ENCODE measurements at regions of chrX and their contacts with region 1.

Region 1: DNA sequence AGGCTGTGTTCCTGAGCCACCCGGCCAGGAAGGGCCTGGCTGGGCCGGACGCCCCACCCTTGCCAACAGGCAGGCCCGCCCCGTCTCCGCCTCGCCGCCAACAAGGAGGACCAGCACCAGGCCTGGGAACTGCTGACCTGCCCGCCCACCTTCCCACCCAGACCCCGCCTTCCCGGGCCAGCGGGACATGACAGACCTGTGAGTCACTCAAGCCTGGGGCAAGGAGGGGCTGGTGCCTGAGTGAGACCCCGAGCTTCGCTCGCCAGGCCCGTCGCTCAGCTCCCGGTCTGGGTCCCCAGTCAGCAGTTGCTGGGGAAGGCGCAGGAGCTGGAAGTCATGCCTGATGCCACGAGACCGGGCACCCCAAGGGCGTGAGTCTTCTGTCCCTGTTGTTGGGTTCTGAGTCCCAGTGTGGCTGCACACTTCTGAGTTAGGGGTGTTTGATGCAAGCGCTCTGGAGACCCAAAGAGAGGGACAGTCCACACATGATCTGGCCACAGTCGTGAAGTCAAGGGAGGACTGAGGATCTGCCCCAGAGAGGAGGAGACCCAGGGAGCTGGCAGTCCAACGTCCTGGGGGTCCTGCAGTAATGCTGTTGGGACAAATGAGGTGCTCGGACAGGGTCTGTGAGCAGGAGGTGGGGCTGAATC is at the start of gene DNASE1L1:
- DNase-seq: peak; percentile 88
- ATAC-seq: peak; percentile 54
- total RNA-seq, gene DNASE1L1: 57.7 TPM

Region 2: DNA sequence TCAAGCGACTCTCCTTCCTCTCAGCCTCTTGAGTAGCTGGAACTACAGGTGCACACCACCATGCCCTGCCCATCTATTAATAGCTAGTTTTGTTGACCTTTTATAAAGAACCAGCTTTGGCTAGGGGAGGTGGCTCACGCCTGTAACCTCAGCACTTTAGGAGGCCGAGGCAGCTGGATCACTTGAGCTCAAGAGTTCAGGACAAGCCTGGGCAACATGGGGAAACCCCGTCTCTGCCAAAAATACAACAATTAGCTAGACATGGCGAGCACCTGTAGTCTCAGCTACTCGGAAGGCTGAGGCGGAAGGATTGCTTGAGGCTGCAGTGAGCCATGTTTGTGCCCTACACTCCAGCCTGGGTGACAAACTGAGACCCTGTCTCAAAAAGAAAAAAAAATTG is 111.0 kb before region 1 on chrX:
- intact Hi-C with region 1: no loop called
- DNase-seq: no peak
- ATAC-seq: no peak

Region 3: DNA sequence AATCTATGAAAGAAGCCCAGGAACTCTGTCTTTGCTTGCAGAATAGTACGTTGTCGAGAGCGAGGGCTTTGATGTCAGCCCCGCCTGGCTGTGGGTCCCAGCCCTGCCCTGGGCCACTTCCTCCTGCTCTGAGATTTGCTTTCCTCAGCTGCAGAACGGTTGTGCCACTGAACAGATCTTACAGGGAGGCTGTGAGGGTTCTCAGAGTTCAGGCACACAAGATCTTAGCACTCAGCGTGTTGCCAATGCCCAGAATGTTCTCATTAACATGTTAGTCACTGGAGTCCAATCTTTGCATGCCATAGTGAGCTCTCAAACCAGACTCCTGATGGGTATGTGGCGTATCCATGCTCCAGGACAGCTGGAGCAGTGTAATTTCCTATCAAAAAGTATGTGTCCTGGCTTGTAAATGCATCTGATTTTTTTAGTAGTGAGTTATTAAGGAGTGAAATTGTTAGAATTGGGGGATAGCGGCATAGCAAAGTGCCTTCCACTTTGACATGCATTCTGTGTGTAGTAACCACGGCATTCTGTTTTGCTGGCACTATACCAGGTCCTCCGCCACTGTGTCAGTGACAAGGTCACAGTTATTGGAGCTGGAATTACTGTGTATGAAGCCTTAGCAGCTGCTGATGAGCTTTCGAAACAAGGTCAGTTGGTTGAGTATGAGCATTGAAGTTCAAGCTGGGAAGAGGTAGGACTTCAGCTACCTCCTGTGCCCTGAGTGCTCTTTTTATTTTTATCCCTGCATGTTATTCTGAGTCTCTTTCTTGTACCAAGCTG is 82.1 kb before region 1 on chrX:
- intact Hi-C with region 1: no loop called
- DNase-seq: no peak
- ATAC-seq: peak; percentile 73

Region 4: DNA sequence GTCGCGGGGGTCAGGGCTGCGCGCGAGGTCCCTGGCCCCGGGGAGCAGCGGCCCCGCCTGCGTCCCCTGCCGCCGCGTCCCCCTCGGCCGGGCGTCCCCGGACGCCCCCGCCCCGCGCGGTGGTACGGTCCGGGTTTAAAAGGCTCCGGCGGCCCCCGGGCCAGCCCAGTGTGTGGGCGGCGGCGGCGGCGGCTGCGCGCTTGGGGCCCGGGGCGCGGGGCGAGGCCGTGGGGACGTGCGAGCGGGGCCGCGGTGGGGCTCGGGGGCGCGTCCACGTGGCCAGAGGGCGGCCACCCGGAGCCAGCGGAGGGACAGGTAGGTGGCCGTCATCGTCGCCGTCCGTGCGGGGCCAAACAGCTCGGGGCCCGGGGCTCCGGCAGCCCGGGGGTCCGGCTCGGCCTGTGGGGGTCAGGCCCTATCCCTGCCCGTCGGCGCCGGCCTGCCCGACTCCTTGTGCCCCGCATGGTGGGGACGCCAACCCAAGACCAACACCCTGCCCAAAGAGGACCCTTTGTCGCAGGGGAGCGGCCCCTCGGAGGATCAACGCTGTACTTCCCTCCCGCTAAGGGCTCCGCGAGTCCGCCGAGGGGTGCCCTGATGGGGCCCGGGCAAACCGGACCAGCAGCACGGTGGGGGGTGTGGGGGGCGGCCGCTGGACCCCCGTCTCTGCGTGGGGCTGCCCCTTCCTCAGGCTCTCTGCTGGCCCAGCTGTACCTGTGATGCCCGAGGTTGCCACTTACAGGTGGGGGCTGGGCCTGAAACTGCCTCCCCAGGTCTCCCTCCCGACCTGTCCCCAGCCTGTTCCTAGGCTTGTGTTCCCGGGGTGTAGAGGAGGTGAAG is 49.0 kb after region 1 on chrX and contains the start of gene PLXNA3:
- intact Hi-C with region 1: loop called (anchors 10 kb)
- DNase-seq: peak; percentile 62
- ATAC-seq: peak; percentile 82
- total RNA-seq, gene PLXNA3: 15.0 TPM